ENCODE measurements at regions of chr5 and their contacts with region 1.

Region 1: GRCh38 chr5:105380126-105380525 is 1817.5 kb upstream of the NUDT12 start:
- DNase-seq: no peak

Region 2: GRCh38 chr5:104024538-104024937 is 1355.6 kb before region 1 on chr5:
- intact Hi-C with region 1: loop called in 1 of 2 experiments (anchors 5 kb)
- DNase-seq: no peak

Region 3: DNA sequence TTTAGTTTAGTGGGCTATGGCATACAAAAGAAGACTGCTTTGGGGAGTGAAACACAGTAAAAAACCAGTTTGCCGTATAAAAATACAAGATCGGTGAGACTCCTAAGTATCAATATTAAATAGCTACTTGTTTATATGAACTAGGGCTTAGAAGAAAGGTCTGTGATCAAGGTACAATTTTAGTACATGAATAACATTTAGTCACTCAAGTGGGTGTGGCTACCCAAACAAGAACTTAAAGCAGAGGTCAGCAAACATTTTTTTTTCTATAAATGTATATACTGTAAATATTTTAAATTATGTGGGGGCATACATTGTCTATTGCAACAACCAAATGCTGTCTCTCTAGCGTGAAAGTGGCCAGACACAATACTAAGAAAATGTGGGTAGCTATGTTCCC is 365.0 kb before region 1 on chr5:
- intact Hi-C with region 1: no loop called
- DNase-seq: no peak

Region 4: GRCh38 chr5:105632043-105632442 is 251.9 kb after region 1 on chr5:
- intact Hi-C with region 1: no loop called
- DNase-seq: no peak

Region 5: DNA sequence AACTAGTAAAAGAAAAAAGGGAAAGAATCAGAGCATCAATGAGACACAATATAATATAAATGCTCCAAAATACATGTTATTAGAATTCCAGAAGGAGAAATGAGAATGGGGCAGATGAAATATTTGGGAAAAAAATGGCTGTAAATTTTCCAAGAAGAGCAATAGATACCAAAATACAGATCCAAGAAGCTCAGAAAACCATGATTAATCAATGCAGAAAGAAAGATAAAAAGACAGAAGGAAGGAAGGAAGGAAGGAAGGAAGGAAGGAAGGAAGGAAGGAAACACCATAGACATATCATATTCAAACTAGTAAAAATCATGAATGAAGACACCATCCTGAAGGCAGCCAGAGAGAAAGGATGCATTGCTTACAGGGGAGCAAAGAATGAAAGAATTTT is 1369.7 kb after region 1 on chr5:
- intact Hi-C with region 1: loop called in 1 of 2 experiments (anchors 5 kb)
- DNase-seq: no peak

Measured in posterior vena cava (tissue), 2 donors.